Heart right ventricle (tissue), 16 donors: ENCODE measurements at regions of chr11 and their contacts with region 1.

Region 1: GRCh38 chr11:69670158-69670845 is 4.9 kb downstream of the LTO1 start:
- DNase-seq: peak; percentile 88 to 90
- ATAC-seq: peak; percentile 49 to 84 (median 72)
- H3K4me3 ChIP-seq: no peak overlapping the region
- H3K27ac ChIP-seq: peak overlapping the region in 6 of 10 donors; percentile 2 to 36 (median 16)
- H3K4me1 ChIP-seq: peaks cover 2 to 35% (median 28%) of the 10 kb centered on the region in 9 donors
- H3K27me3 ChIP-seq: no peaks in the 10 kb centered on the region
- CTCF ChIP-seq: peak; percentile 89 to 98 (median 96)

Region 2: DNA sequence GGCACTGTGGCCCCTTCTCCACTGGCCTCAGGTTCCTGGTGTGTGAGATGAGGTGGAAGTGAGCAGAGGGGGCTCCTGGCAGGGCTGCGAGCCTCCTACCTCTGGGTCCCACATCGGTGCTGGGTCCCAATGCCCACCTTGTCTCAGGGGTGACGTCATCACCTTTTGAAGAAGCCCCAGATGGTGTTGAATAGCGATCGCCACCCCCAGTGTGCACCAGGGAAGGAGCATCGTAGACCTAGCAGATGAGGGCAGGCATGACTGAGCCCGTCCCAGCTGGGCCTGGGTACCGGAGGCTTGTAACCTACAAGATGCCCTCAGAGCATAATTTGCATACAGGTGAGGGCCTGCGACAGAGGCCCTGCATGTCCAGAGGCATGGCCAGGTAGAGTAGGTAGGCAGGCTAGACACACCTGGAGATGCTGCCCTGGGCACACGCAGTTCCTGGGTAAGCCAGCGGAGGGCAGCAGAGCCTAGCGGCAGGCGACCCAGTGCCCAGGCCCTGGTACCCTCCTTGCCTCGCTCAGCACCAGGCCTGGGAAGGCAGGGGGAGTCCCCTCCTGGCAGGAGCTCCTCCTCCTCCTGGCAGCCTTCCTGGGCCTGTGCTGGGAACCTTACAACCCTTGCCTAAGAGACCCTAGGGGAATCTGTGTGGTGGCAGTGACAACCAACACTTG is 569.0 kb before region 1 on chr11:
- intact Hi-C with region 1: loop called in 8 of 10 experiments (anchors 1 to 5 kb)
- DNase-seq: peak; percentile 64 to 78
- ATAC-seq: peak; percentile 80 to 89 (median 83)
- H3K4me3 ChIP-seq: no peak overlapping the region
- H3K27ac ChIP-seq: no peak overlapping the region
- H3K4me1 ChIP-seq: peaks cover 3 to 20% (median 15%) of the 10 kb centered on the region in 9 donors
- H3K27me3 ChIP-seq: peaks cover 0 to 5% (median 0%) of the 10 kb centered on the region in 7 donors
- CTCF ChIP-seq: peak in 8 of 9 donors; percentile 97 to 100 (median 99)